Naive thymus-derived CD4-positive, alpha-beta T cell (primary cell): ENCODE measurements at regions of chr10 and their contacts with region 1.

Region 1: GRCh38 chr10:79445141-79445976 is at the start of gene ZCCHC24:
- DNase-seq: peak; percentile 83 to 95 (median 92)
- ATAC-seq: peak; percentile 95
- H3K4me3 ChIP-seq: peak within 1 kb of the TSS; percentile 78
- H3K4me3 Mint-ChIP-seq: peak within 1 kb of the TSS; percentile 86 to 99 (median 91)
- H3K27ac ChIP-seq: peak within 1 kb of the TSS; percentile 67
- H3K27ac Mint-ChIP-seq: peak within 1 kb of the TSS; percentile 27 to 91 (median 84)
- H3K4me1 ChIP-seq: peaks cover 10% of the 10 kb centered on the region in 2 donors
- H3K4me1 Mint-ChIP-seq: peaks cover 20 to 35% (median 28%) of the 10 kb centered on the region in 7 donors
- H3K27me3 ChIP-seq: no peaks in the 10 kb centered on the region
- H3K27me3 Mint-ChIP-seq: peaks cover 0 to 44% (median 0%) of the 10 kb centered on the region in 5 donors
- total RNA-seq, gene ZCCHC24: 0.58 to 2.0 (median 0.76) TPM

Region 2: DNA sequence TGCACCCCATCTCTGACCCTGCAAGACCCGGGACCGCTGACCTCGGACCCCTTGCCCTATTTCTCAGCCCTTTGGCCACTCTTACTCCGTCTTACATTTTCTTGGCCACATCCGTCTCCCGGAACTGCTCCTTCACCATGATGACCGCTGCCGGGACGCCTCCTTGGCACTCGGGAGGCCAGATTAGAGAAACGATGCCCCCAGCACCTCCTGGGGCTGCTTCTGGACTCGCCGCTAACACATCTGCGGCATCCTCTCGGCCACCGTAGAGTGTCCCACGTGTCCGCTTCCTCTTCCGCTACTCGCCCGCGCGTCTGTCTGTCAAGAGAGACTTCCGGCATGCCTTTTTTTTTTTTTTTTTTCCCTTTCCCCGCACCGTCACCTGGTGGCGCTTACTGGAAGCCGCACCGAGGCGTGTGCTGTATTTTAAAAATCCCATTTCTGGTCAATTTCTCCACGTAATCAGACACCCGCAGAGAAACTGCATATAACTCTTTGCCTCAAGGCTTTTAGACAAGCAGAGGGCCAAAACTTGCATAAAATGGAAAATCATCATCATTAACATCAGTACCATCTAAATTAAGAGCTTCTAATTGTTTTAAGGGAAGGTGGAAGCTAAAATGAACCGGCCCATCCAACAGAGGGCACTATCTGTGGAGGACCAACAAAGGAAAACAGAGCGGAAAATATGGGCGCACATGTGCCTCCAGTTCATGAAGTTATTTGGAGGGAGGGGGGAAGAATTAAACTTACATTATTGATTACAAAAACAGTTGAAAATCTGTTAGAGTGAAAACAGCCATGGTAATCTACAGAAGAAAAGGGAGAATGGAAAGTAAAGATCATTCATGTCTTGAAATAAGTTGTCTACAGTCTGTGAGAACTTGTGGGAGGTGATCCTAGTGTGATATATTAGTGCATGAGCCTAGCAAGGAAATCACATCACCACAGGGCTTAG is 1415.8 kb before region 1 on chr10 and contains the start of gene POLR3A:
- CTCF ChIA-PET with region 1: no interaction called
- POLR2A ChIA-PET with region 1: no interaction called
- intact Hi-C with region 1: loop called (anchors 1 to 5 kb)
- DNase-seq: peak; percentile 79 to 94 (median 90)
- ATAC-seq: peak; percentile 77
- H3K4me3 ChIP-seq: peak within 1 kb of the TSS; percentile 99
- H3K4me3 Mint-ChIP-seq: peak within 1 kb of the TSS; percentile 92 to 100 (median 99)
- H3K27ac ChIP-seq: peak within 1 kb of the TSS; percentile 89
- H3K27ac Mint-ChIP-seq: peak within 1 kb of the TSS; percentile 88 to 99 (median 95)
- H3K4me1 ChIP-seq: peaks cover 12 to 19% of the 10 kb centered on the region in 2 donors
- H3K4me1 Mint-ChIP-seq: peaks cover 22 to 50% (median 37%) of the 10 kb centered on the region in 7 donors
- H3K27me3 ChIP-seq: no peaks in the 10 kb centered on the region
- H3K27me3 Mint-ChIP-seq: no peaks in the 10 kb centered on the region
- total RNA-seq, gene POLR3A: 12.0 to 20.9 (median 19.0) TPM

Region 3: GRCh38 chr10:79242620-79243152 is 202.7 kb before region 1 on chr10:
- CTCF ChIA-PET with region 1: no interaction called
- POLR2A ChIA-PET with region 1: no interaction called
- intact Hi-C with region 1: loop called (anchors 1 to 5 kb)
- DNase-seq: peak; percentile 6 to 71 (median 35)
- ATAC-seq: peak; percentile 39
- H3K4me3 ChIP-seq: peak overlapping the region; percentile 37
- H3K4me3 Mint-ChIP-seq: peak overlapping the region; percentile 43 to 87 (median 77)
- H3K27ac ChIP-seq: no peak overlapping the region
- H3K27ac Mint-ChIP-seq: peak overlapping the region in 1 of 9 donors; percentile 80
- H3K4me1 ChIP-seq: peaks cover 27 to 38% of the 10 kb centered on the region in 2 donors
- H3K4me1 Mint-ChIP-seq: peaks cover 39 to 58% (median 41%) of the 10 kb centered on the region in 7 donors
- H3K27me3 ChIP-seq: no peaks in the 10 kb centered on the region
- H3K27me3 Mint-ChIP-seq: no peaks in the 10 kb centered on the region

Region 4: DNA sequence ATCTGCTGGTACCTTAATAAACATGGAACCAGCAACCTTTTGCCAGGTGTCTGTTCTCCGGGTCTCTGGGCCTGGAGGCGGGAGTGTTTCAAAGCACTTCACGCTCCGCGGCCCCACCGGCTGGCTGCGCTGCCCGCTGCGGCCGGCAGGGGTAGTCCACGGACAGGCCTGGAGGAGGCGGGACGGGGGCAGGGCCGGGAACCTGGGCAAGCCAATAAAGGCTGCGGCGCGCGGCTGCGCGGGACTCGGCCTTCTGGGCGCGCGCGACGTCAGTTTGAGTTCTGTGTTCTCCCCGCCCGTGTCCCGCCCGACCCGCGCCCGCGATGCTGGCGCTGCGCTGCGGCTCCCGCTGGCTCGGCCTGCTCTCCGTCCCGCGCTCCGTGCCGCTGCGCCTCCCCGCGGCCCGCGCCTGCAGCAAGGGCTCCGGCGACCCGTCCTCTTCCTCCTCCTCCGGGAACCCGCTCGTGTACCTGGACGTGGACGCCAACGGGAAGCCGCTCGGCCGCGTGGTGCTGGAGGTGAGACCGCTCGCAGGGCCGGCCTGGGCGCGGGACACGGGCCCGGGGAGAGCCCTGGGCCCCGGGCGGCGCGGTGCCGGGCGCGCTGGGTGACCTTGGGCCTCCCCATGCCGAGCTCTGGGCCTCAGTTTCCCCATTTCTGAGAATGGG is 98.0 kb before region 1 on chr10 and contains the start of gene PPIF:
- CTCF ChIA-PET with region 1: no interaction called
- POLR2A ChIA-PET with region 1: interaction called, 3 read pairs
- intact Hi-C with region 1: loop called (anchors 1 kb)
- DNase-seq: peak; percentile 79 to 99 (median 90)
- ATAC-seq: peak; percentile 96
- H3K4me3 ChIP-seq: peak within 1 kb of the TSS; percentile 72
- H3K4me3 Mint-ChIP-seq: peak within 1 kb of the TSS; percentile 71 to 92 (median 78)
- H3K27ac ChIP-seq: peak within 1 kb of the TSS; percentile 73
- H3K27ac Mint-ChIP-seq: peak within 1 kb of the TSS; percentile 76 to 96 (median 86)
- H3K4me1 ChIP-seq: peaks cover 19 to 25% of the 10 kb centered on the region in 2 donors
- H3K4me1 Mint-ChIP-seq: peaks cover 9 to 50% (median 19%) of the 10 kb centered on the region in 7 donors
- H3K27me3 ChIP-seq: no peaks in the 10 kb centered on the region
- H3K27me3 Mint-ChIP-seq: no peaks in the 10 kb centered on the region
- total RNA-seq, gene PPIF: 20.6 to 192 (median 73.3) TPM

Region 5: GRCh38 chr10:80187465-80188409 is 742.4 kb after region 1 on chr10:
- CTCF ChIA-PET with region 1: no interaction called
- POLR2A ChIA-PET with region 1: no interaction called
- intact Hi-C with region 1: loop called in 1 of 2 experiments (anchors 1 kb)
- DNase-seq: peak; percentile 58 to 96 (median 93)
- ATAC-seq: peak; percentile 94
- H3K4me3 ChIP-seq: peak overlapping the region; percentile 37
- H3K4me3 Mint-ChIP-seq: peak overlapping the region; percentile 77 to 95 (median 85)
- H3K27ac ChIP-seq: peak overlapping the region; percentile 84
- H3K27ac Mint-ChIP-seq: peak overlapping the region; percentile 90 to 98 (median 93)
- H3K4me1 ChIP-seq: peaks cover 48 to 81% of the 10 kb centered on the region in 2 donors
- H3K4me1 Mint-ChIP-seq: peaks cover 74 to 91% (median 90%) of the 10 kb centered on the region in 7 donors
- H3K27me3 ChIP-seq: no peaks in the 10 kb centered on the region
- H3K27me3 Mint-ChIP-seq: no peaks in the 10 kb centered on the region

Region 6: GRCh38 chr10:80535671-80536365 is 1090.5 kb after region 1 on chr10:
- CTCF ChIA-PET with region 1: no interaction called
- POLR2A ChIA-PET with region 1: no interaction called
- intact Hi-C with region 1: loop called in 1 of 2 experiments (anchors 10 kb)
- DNase-seq: peak; percentile 64 to 82 (median 78)
- ATAC-seq: peak; percentile 92
- H3K4me3 ChIP-seq: peak overlapping the region; percentile 59
- H3K4me3 Mint-ChIP-seq: peak overlapping the region; percentile 84 to 99 (median 93)
- H3K27ac ChIP-seq: peak overlapping the region; percentile 82
- H3K27ac Mint-ChIP-seq: peak overlapping the region; percentile 97 to 100 (median 99)
- H3K4me1 ChIP-seq: peaks cover 13 to 28% of the 10 kb centered on the region in 2 donors
- H3K4me1 Mint-ChIP-seq: peaks cover 17 to 42% (median 40%) of the 10 kb centered on the region in 7 donors
- H3K27me3 ChIP-seq: no peaks in the 10 kb centered on the region
- H3K27me3 Mint-ChIP-seq: no peaks in the 10 kb centered on the region